GM12878 (cell line): ENCODE measurements at regions of chr21 and their contacts with region 1.

Region 1: DNA sequence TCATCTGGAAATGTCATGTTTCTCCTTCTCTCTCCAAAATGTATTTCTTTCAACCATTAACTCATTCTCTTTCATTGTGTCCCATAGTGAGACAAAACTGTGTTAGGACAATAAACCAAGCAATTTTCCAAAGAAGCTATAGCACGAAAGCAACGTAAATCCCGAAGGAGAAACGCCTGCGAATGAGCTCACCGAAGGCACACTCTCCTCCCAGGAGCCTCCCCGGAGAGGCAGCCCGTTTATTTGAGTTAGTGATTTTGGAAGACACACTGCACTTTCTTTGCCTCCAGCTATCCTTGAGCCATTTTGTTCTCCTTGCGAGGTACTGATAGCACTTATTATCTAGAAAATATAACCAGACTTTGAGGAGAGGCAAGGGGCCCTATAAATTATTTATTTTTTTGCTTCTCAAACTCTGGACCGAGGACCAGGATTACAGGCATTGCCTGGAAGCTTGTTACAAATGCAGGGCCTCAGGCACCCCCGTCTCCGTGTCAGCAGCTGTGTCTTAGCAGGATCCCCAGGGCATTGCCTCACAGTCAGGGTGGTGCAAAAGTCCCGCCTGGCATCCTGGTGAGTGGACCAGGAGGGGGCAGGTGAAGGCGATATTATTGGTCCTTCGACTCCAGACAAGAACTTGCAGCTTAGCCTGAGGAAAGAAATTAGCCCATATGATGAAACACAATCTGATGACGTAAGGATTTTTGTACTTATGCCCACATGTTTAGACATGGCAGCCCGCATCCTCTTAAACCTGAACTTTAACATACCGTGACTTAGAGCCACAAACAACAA is 41.0 kb downstream of the RSPH1 start:
- DNase-seq: no peak
- ATAC-seq: no peak
- H3K4me3 ChIP-seq: no peak overlapping the region
- H3K27ac ChIP-seq: no peak overlapping the region
- H3K4me1 ChIP-seq: peaks cover 8% of the 10 kb centered on the region
- H3K27me3 ChIP-seq: no peaks in the 10 kb centered on the region
- CTCF ChIP-seq: no peak
- EP300 ChIP-seq: no peak
- POLR2A ChIP-seq: no peak
- RAD21 ChIP-seq: peak; percentile 27; the same call in 1 of the 2 replicates

Region 2: DNA sequence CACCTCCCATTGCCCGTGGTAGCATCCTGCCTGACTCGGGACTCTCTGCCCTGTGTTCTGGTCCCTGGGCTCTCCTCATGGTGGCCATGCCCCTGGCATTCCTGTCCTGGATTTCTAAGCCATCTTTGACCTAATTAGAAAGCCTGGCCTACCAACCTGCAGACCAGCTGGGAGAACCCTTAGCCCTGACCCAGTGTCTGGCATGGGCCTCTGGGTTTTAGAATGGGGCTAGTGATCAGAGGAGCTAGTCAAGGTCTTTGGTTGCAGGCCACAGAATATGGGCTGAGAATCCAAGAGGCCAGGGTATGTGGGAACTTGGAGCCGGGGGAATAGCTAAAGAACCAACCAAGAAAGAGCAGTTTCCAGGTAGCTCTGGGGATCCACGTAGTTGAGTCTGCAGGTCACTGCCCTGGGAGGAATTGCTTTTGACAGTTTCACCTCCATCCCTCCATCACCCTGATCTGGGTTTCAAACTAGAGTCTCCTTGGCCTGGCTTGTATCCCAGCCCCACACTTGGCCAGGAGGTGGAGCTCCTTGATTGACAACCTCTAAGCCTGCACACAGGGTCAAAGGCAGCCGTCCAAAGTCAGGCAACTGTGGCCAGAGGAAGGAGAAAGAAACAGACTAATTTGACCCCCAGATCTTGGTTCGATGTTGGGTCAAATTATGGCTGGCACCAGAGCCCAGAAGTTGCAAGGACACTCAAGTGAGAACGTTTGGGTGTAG is 290.8 kb before region 1 on chr21:
- CTCF ChIA-PET with region 1: interaction called, 4 read pairs
- POLR2A ChIA-PET with region 1: no interaction called
- RAD21 ChIA-PET with region 1: no interaction called
- SMC1A ChIA-PET with region 1: interaction called, 4 read pairs
- in situ Hi-C with region 1: no loop called
- intact Hi-C with region 1: loop called (anchors 1 kb)
- DNase-seq: no peak
- ATAC-seq: peak; percentile 99
- H3K4me3 ChIP-seq: no peak overlapping the region
- H3K27ac ChIP-seq: no peak overlapping the region
- H3K4me1 ChIP-seq: no peaks in the 10 kb centered on the region
- H3K27me3 ChIP-seq: peaks cover 2 to 3% of the 10 kb centered on the region in 2 experiments; a peak in 3 of 4 replicates
- CTCF ChIP-seq: peak; percentile 73 to 90 (median 78)
- EP300 ChIP-seq: no peak
- POLR2A ChIP-seq: no peak
- RAD21 ChIP-seq: peak; percentile 99

Region 3: DNA sequence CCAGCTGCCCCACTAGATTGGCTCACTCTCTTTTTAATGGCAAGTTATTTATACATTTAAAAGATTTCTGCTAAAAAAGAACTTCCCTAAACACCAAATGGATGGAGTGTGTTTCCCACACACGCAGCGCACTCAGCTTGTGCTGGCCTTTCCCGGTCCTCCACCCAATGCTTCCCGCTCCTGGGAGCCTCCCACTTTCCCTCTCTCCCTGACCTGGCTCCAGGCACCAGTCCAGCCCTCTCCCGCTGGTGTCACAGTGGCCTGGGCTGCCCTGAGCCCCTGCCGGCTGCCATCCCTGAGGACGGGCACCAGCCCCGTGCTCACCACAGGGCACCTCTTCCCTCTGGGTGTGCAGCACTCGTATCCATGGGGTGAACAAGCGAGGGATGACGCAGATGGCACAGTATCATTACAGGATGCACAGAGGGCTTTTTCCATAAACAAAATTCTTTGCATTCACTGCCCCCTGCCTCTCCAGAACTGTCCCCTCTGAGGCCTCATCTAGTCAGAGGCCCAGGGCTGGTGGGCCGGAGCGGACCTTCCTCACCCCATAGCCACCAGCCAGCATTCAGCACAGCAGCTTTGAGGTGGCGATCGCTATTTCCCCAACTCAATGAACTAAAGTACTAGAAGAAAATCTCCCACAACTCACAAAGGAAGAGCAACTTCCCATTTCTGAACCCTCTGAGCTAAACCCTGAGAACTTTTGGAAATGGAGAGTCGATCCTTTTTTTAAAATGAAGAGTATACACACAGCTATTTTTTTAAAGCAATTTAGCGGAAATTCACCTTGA is 127.2 kb after region 1 on chr21:
- CTCF ChIA-PET with region 1: no interaction called
- POLR2A ChIA-PET with region 1: no interaction called
- RAD21 ChIA-PET with region 1: no interaction called
- SMC1A ChIA-PET with region 1: no interaction called
- in situ Hi-C with region 1: no loop called
- intact Hi-C with region 1: no loop called
- DNase-seq: no peak
- ATAC-seq: no peak
- H3K4me3 ChIP-seq: no peak overlapping the region
- H3K27ac ChIP-seq: no peak overlapping the region
- H3K4me1 ChIP-seq: no peaks in the 10 kb centered on the region
- H3K27me3 ChIP-seq: no peaks in the 10 kb centered on the region
- CTCF ChIP-seq: no peak
- EP300 ChIP-seq: no peak
- POLR2A ChIP-seq: no peak
- RAD21 ChIP-seq: no peak

Region 4: DNA sequence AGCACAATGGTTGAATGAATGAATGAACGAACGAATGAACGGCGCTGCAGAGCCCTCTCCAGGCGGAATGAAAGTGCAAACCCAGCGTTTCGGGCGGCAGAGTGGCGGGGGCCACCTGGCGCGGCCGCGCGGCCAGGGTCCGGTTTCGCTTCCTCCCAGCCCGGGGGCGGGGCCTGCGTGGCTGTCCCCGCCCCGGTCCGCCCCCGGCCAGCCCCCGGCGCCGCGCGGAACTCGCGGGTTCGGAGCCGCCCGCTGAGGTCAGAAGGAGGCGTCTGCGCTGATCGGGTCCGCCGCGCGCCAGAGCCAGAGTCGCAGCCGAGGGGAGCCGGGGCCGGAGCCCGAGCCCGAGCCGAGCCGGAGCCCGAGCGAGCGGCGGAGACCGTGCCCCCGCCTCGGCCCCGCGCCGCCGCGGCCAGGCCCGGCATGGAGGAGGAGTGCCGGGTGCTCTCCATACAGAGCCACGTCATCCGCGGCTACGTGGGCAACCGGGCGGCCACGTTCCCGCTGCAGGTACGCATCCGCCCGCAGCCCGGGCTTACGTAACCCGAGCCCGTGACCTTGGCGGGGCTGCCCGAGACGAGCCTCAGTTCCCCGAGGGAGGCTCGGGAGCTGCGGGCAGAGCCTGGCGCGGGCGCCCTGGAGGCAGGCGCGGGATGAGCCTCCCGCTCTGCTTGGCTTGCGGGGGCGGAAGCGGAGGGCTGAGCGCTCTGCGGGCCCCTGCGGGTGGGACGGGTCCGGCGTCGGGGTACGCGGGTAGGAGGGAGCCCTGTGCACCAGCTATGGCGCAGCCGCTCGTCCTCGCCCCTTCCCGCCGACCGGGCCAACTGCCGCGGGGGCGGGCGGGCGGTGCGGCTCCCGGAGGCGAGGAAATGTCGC is 1264.1 kb after region 1 on chr21 and contains the start of gene PDXK:
- CTCF ChIA-PET with region 1: no interaction called
- POLR2A ChIA-PET with region 1: no interaction called
- RAD21 ChIA-PET with region 1: no interaction called
- SMC1A ChIA-PET with region 1: no interaction called
- in situ Hi-C with region 1: no loop called
- intact Hi-C with region 1: no loop called
- DNase-seq: peak; percentile 35
- ATAC-seq: peak; percentile 69
- H3K4me3 ChIP-seq: peak within 1 kb of the TSS; percentile 88
- H3K27ac ChIP-seq: peak within 1 kb of the TSS; percentile 86
- H3K4me1 ChIP-seq: peaks cover 50% of the 10 kb centered on the region
- H3K27me3 ChIP-seq: no peaks in the 10 kb centered on the region
- CTCF ChIP-seq: peak; percentile 13 to 47 (median 15); a peak in 4 of 6 replicates
- EP300 ChIP-seq: peak; percentile 12 to 41; a peak in 1 of 4 replicates
- POLR2A ChIP-seq: peak; percentile 80
- RAD21 ChIP-seq: no peak
- polyA plus RNA-seq, gene PDXK: 3.7 to 11.4 TPM

Region 5: GRCh38 chr21:43740497-43741156 is 1285.6 kb after region 1 on chr21:
- CTCF ChIA-PET with region 1: no interaction called
- POLR2A ChIA-PET with region 1: no interaction called
- RAD21 ChIA-PET with region 1: no interaction called
- SMC1A ChIA-PET with region 1: no interaction called
- in situ Hi-C with region 1: no loop called
- intact Hi-C with region 1: no loop called
- DNase-seq: no peak
- ATAC-seq: peak; percentile 36; the same call in 2 of the 3 replicates
- H3K4me3 ChIP-seq: no peak overlapping the region
- H3K27ac ChIP-seq: no peak overlapping the region
- H3K4me1 ChIP-seq: no peaks in the 10 kb centered on the region
- H3K27me3 ChIP-seq: no peaks in the 10 kb centered on the region
- CTCF ChIP-seq: no peak
- EP300 ChIP-seq: no peak
- POLR2A ChIP-seq: peak; percentile 22; the same call in 1 of the 2 replicates
- RAD21 ChIP-seq: no peak